ENCODE measurements at regions of chr6 and their contacts with region 1.

Region 1: DNA sequence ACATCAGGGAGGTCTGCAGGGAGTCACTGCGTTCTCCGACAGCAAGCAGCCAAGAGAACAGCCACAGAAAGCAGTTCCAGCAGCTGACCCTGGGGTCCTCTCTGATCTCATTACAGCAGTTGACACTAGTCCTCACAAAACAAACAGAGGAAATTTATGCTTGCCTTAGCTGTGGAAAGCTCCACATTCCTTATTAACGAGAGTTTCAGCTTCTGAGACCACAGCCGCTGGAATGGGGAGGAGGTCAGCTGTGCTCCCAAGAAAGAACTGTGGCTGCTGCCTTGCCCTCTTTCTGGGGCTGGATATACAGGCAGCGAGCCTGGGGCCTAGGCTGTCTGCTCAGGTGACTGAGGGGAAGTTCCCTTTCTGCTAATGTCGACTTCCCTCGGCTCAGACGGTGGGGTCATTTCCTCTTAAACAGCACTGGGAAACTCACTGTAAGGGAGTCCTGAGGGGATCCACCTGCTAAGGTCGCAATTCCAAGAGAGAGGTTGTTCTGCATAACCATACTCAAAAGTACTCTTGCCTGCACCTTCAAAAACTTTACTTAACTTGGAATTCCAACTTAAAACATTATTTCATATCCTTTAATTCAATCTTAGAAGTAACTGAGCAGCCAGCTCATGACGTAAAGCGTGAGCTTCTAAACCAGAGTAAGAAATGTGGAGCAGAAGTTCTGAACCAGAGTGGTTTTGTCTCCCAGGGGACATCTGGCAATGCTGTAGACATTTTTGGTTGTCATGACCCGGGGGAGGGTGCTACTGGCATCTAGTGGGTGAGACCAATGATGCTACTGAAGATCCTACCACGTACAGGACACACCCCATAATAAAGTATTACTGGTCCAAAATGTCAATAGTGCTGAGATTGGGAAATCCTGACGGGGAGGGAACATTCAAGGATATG is 80.3 kb downstream of the BACH2 start:
- DNase-seq: peak; percentile 70
- ATAC-seq: peak; percentile 48
- H3K4me3 Mint-ChIP-seq: peak overlapping the region; percentile 69
- H3K27ac Mint-ChIP-seq: no peak overlapping the region
- H3K4me1 Mint-ChIP-seq: peaks cover 28% of the 10 kb centered on the region
- H3K27me3 Mint-ChIP-seq: no peaks in the 10 kb centered on the region
- CTCF ChIP-seq: no peak

Region 2: DNA sequence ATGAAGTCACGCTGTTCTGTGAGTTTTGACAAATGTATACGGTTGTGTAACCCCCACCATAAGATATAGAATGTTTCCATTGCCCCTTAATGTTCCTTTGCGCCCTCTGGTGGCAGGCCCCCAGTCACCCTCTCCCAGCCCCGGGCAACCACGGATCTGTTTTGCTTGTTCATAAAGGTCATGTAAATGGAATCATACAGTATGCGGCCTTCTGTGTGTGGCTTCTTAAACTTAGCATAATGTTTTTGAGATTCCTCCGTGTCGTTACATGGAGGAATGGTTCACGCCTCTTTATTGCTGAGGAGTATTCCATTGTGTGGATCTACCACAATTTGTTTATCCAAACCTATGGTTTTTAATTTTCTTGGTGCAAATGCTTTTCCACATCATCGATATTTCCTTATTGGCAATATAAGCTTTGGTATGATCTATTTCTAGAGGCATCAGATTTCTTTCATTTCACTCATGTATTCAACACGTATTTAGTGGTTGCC is 606.1 kb before region 1 on chr6:
- CTCF ChIA-PET with region 1: no interaction called
- POLR2A ChIA-PET with region 1: no interaction called
- intact Hi-C with region 1: no loop called
- DNase-seq: peak; percentile 90
- ATAC-seq: peak; percentile 95
- H3K4me3 Mint-ChIP-seq: no peak overlapping the region
- H3K27ac Mint-ChIP-seq: no peak overlapping the region
- H3K4me1 Mint-ChIP-seq: peaks cover 5% of the 10 kb centered on the region
- H3K27me3 Mint-ChIP-seq: no peaks in the 10 kb centered on the region
- CTCF ChIP-seq: peak; percentile 94

Region 3: DNA sequence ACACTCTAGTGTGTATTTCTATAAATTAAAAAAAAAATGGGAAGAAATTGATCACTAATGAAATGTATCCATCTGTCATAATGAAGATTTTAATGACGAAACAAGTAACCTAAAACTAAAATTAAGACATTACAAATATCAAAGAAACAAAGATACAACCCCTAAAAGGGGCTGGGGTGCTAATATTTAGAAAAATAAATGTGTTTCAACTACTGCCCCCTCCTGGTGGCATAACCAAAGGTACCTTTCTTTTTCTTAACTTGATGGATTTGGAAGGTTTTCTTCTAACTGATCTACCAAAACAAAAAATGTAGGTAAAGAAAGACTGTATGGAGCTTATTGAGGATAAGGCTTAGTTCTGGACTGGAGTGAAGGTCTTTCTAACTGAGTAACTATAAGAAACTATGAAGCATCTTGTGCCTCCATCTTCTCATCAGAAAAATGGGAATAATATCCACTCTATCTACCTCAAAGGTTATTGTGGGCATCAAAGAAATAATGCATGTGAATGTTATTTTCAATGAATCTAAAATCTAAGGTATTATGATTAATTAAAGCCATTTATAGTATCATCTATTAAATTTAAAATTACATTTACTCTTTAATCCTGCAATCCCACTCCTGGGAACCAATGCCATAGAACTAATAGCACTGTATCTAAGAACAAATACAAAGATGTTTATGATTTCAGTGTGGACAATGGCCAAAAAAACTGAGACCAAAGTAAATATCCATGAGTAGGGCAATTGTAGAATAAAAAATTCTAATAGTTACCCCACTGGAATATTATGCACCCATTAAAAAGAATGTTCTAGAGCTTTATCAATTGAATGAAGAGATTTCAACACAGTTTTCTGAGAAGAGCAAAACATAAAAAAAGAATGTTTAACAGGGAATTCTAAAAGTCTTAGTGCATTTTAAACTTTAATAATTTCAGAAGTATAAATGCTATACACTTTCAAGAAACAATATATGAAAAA is 36.8 kb before region 1 on chr6:
- CTCF ChIA-PET with region 1: interaction called, 18 read pairs
- POLR2A ChIA-PET with region 1: interaction called, 16 read pairs
- intact Hi-C with region 1: no loop called
- DNase-seq: peak; percentile 64
- ATAC-seq: no peak
- H3K4me3 Mint-ChIP-seq: no peak overlapping the region
- H3K27ac Mint-ChIP-seq: peak overlapping the region; percentile 87
- H3K4me1 Mint-ChIP-seq: peaks cover 81% of the 10 kb centered on the region
- H3K27me3 Mint-ChIP-seq: no peaks in the 10 kb centered on the region
- CTCF ChIP-seq: peak; percentile 75

Region 4: GRCh38 chr6:90197854-90198496 is 18.4 kb before region 1 on chr6:
- CTCF ChIA-PET with region 1: interaction called, 52 read pairs
- POLR2A ChIA-PET with region 1: interaction called, 39 read pairs
- intact Hi-C with region 1: no loop called
- DNase-seq: peak; percentile 37
- ATAC-seq: no peak
- H3K4me3 Mint-ChIP-seq: no peak overlapping the region
- H3K27ac Mint-ChIP-seq: peak overlapping the region; percentile 87
- H3K4me1 Mint-ChIP-seq: peaks cover 77% of the 10 kb centered on the region
- H3K27me3 Mint-ChIP-seq: no peaks in the 10 kb centered on the region
- CTCF ChIP-seq: no peak

Region 5: DNA sequence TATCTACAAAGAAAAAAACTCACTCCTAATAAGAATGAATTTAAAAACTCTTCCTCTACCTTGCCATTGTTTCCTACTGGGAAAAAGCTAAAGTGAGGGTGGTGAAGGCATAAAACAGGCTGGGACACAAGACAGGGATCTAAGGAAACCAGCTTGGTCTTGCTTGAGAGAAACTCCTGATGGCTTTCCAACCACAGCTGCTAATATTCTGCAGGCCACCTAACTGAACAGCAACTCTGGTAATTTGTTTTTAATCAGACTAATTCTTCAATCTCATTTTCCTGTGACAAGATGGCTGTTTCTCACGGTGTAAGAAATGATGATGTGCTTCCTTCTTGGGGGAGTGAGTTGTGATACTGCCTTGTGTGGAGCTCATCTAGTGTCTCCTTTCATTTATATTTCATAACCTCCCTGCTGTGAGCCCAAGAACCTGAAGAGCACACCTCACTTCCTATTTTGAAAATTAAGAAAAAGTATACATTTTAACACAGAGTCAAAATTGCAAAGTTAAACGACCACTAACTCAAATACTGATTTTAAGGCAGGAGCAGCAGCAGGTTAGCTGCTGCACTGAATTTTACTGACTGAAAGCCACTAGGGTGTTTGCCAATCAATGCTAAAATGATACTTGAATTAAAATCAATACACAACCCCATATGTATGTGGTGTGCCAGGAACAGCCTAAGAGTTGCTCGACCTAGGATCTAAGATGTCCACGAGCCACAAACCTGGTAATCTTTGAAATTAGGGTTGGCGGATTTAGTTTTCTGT is 22.4 kb after region 1 on chr6:
- CTCF ChIA-PET with region 1: interaction called, 3 read pairs
- POLR2A ChIA-PET with region 1: interaction called, 34 read pairs
- intact Hi-C with region 1: no loop called
- DNase-seq: no peak
- ATAC-seq: no peak
- H3K4me3 Mint-ChIP-seq: peak overlapping the region; percentile 44
- H3K27ac Mint-ChIP-seq: peak overlapping the region; percentile 94
- H3K4me1 Mint-ChIP-seq: peaks cover 84% of the 10 kb centered on the region
- H3K27me3 Mint-ChIP-seq: no peaks in the 10 kb centered on the region
- CTCF ChIP-seq: no peak

Region 6: DNA sequence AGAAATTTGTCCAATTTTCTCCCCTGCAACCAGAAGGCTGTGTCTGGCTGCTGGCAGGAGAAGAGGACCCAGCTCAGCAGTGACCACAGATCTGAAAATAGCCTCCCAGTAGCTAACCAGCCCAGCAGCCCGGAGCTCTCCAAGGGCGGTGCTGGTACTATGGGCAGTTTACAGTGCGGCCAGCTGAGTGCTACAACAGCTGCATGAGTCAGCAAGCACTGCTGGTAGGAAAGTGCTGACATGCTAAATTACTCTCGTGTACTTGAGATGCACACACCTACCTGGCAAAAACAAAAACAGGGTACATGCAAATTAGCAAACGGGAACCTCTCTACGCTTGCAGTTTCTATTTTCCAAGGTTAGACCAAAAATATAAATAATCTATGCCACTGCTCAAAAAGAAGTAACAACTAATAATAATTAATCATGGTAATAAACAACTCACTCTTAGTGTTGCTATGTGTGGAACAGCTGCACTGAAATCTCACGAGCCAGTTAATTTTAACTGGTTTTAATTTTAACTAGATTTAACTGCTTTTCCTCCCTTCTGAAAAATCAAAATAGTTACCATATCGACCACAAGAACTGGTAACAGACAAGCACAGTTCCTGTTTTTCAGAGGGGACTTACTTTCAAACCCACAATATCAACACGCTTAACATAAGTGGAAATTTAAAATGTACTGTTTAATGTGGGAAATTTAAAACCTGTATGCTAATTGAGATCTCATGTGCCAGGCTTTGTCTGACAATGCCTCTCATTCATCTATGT is 69.5 kb after region 1 on chr6:
- CTCF ChIA-PET with region 1: interaction called, 11 read pairs
- POLR2A ChIA-PET with region 1: interaction called, 14 read pairs
- intact Hi-C with region 1: no loop called
- DNase-seq: peak; percentile 80
- ATAC-seq: peak; percentile 40
- H3K4me3 Mint-ChIP-seq: peak overlapping the region; percentile 64
- H3K27ac Mint-ChIP-seq: peak overlapping the region; percentile 94
- H3K4me1 Mint-ChIP-seq: peaks cover 87% of the 10 kb centered on the region
- H3K27me3 Mint-ChIP-seq: no peaks in the 10 kb centered on the region
- CTCF ChIP-seq: no peak

Region 7: GRCh38 chr6:90350689-90351554 is 134.6 kb after region 1 on chr6:
- CTCF ChIA-PET with region 1: no interaction called
- POLR2A ChIA-PET with region 1: no interaction called
- intact Hi-C with region 1: no loop called
- DNase-seq: peak; percentile 63
- ATAC-seq: peak; percentile 74
- H3K4me3 Mint-ChIP-seq: peak overlapping the region; percentile 59
- H3K27ac Mint-ChIP-seq: peak overlapping the region; percentile 93
- H3K4me1 Mint-ChIP-seq: peaks cover 49% of the 10 kb centered on the region
- H3K27me3 Mint-ChIP-seq: no peaks in the 10 kb centered on the region
- CTCF ChIP-seq: no peak

Region 8: GRCh38 chr6:90386399-90387382 is 170.4 kb after region 1 on chr6:
- CTCF ChIA-PET with region 1: no interaction called
- POLR2A ChIA-PET with region 1: no interaction called
- intact Hi-C with region 1: no loop called
- DNase-seq: no peak
- ATAC-seq: no peak
- H3K4me3 Mint-ChIP-seq: no peak overlapping the region
- H3K27ac Mint-ChIP-seq: no peak overlapping the region
- H3K4me1 Mint-ChIP-seq: peaks cover 45% of the 10 kb centered on the region
- H3K27me3 Mint-ChIP-seq: no peaks in the 10 kb centered on the region
- CTCF ChIP-seq: no peak

Measured in activated CD8-positive, alpha-beta T cell treated with anti-CD3 and anti-CD28 coated beads for 36 hours (primary cell).